ENCODE measurements at regions of chr10 and their contacts with region 1.

Region 1: DNA sequence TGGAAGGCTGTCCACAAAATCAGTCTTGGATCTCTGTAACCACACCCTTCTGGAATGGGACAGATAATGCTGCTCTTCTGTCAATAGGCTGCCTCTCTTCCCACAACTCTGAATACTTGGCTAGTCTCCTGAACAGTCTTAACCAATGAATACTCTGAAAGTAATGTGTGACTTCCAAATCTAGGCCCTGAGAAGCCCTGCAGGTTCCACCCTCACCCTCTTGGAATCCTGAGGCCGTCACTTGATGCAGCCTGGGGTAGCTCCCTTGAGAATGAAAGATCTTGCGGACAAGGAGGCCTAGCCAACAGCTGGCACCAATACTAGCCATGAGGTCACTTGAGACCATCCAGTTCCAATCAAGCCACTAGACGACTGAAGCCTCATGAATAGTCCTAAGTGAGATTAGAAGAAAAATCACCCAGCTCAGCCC is 109.2 kb downstream of the ARHGAP12 start:
- DNase-seq: peak; percentile 34 to 85
- H3K4me3 ChIP-seq: no peak overlapping the region
- CTCF ChIP-seq: no peak
- POLR2A ChIP-seq: no peak

Region 2: DNA sequence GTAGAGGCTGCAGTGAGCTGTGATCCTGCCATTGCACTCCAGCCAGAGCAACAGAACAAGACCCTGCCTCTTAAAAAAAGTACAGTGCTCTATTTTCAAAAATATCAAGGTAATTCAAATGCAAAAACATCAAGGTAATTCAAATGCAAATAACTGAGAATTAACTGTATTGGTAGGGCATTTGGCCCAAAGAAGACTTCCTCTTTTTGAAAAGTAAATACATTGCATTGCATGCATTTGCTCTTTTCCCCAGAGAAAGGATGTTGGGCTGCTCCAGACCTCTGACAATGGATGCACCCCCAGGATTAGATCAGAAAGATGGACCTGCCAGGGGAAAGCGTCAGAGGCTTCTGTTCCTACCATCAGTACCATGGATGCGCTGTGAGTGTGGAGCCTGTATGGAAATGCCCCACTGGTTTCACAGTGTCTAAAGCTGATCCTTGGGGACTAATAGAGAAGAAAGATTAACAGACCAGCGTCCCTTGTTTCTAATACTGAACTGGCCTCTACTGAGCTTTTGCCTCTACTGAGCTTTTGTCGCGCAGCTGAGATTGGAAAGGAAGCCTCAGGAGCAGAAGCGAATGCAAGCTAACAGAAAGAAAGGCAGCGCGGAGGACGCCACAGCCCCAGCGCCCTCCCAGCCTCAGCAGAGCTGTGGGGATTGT is 1096.3 kb before region 1 on chr10:
- intact Hi-C with region 1: loop called (anchors 10 kb)
- DNase-seq: peak in 1 of 2 donors; percentile 28
- H3K4me3 ChIP-seq: no peak overlapping the region
- CTCF ChIP-seq: no peak
- POLR2A ChIP-seq: no peak